WTC11 (cell line): ENCODE measurements at regions of chr1 and their contacts with region 1.

Region 1: DNA sequence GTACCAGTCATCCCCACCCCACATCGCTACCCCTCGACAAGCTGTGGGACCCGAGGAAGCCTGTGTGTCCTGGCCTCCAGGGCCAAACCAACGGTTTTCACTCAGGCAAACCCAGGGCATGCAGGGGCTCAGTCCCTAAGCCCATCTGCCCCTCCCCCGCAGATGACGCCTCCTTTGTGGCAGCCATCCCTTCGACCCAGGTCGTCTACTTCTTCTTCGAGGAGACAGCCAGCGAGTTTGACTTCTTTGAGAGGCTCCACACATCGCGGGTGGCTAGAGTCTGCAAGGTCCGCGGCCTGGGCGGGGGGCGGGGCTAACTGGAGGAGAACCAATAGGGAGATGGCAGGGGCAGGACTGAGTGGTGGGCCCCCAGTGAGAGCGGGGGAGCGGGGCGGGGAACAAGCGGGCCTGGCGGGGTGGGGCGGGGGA is 7.4 kb downstream of the SEMA4A start:
- DNase-seq: peak; percentile 87
- ATAC-seq: peak; percentile 95
- H3K4me3 Mint-ChIP-seq: peak overlapping the region; percentile 71
- H3K27ac Mint-ChIP-seq: no peak overlapping the region
- H3K4me1 Mint-ChIP-seq: peaks cover 27% of the 10 kb centered on the region
- H3K27me3 Mint-ChIP-seq: no peaks in the 10 kb centered on the region
- CTCF ChIP-seq: no peak

Region 2: GRCh38 chr1:156146020-156146768 is 14.6 kb before region 1 on chr1:
- CTCF ChIA-PET with region 1: interaction called, 16 read pairs
- POLR2A ChIA-PET with region 1: no interaction called
- DNase-seq: no peak
- ATAC-seq: peak; percentile 12
- H3K4me3 Mint-ChIP-seq: peak overlapping the region; percentile 58
- H3K27ac Mint-ChIP-seq: peak overlapping the region; percentile 87
- H3K4me1 Mint-ChIP-seq: peaks cover 53% of the 10 kb centered on the region
- H3K27me3 Mint-ChIP-seq: no peaks in the 10 kb centered on the region; the same call in 1 of the 2 replicates
- CTCF ChIP-seq: peak; percentile 27; the same call in 1 of the 2 replicates

Region 3: DNA sequence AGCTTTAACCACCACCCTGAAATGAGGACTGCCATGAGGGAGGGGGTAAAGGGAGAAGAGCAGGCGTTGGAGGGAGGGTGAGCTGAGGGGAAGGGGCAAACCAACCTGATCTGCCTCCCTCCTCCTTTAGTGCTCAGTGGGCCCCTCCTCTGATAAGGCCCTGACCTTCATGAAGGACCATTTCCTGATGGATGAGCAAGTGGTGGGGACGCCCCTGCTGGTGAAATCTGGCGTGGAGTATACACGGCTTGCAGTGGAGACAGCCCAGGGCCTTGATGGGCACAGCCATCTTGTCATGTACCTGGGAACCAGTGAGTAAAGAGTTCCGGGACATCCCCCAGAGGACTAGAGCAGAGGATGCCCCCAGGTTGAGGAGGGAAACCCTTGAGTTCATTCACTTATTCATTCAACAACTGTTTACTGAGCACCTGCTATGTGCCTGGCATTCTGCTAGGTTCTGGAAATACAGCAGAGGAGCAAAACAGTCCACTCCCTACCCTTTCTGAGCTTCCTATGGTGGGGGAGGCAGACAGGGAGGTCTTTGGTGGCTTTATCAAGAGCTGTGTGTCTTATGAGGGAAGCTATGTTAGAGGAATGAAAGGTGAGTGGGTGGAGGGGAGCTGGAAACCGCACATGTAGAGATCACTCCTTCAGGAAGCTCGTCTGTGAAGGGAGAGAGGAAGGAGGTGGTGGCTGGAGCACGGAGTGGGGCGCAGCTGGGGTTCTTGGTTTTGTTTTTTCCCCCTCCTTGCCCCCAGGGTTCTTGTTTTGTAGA is 12.1 kb after region 1 on chr1:
- CTCF ChIA-PET with region 1: interaction called, 18 read pairs
- POLR2A ChIA-PET with region 1: no interaction called
- DNase-seq: peak; percentile 64
- ATAC-seq: peak; percentile 89
- H3K4me3 Mint-ChIP-seq: no peak overlapping the region
- H3K27ac Mint-ChIP-seq: no peak overlapping the region; the same call in 1 of the 2 replicates
- H3K4me1 Mint-ChIP-seq: peaks cover 31% of the 10 kb centered on the region
- H3K27me3 Mint-ChIP-seq: no peaks in the 10 kb centered on the region
- CTCF ChIP-seq: no peak